ENCODE measurements at regions of chr1 and their contacts with region 1.

Region 1: DNA sequence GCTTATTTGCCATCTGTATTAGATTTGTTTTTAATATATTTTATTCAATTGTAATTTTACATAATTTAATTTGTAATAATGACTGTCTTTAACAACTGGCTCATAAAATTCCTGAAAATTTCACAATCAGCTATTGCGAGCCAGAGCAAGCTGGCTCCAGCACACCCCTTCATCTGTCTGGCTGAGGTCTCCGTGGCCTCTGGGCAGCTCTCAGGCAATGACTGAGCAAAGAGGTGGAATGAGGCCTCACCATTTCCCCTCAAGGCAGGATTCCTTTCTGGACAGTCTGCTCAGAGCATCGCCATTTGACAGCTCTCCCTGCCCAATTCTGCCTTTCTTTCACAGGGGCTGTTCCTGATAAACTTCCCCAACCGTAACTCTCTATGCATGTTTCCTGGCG is 5.8 kb upstream of the KANK4 start:
- DNase-seq: peak; percentile 89
- H3K4me3 Mint-ChIP-seq: peak overlapping the region; percentile 54
- H3K27ac Mint-ChIP-seq: peak overlapping the region; percentile 16
- H3K4me1 Mint-ChIP-seq: peaks cover 34% of the 10 kb centered on the region
- H3K27me3 Mint-ChIP-seq: no peaks in the 10 kb centered on the region
- CTCF ChIP-seq: no peak

Region 2: GRCh38 chr1:61606448-61607312 is 718.4 kb before region 1 on chr1:
- CTCF ChIA-PET with region 1: no interaction called
- POLR2A ChIA-PET with region 1: no interaction called
- intact Hi-C with region 1: no loop called
- DNase-seq: peak; percentile 71
- H3K4me3 Mint-ChIP-seq: peak overlapping the region; percentile 10
- H3K27ac Mint-ChIP-seq: peak overlapping the region; percentile 78
- H3K4me1 Mint-ChIP-seq: peaks cover 20% of the 10 kb centered on the region
- H3K27me3 Mint-ChIP-seq: no peaks in the 10 kb centered on the region
- CTCF ChIP-seq: no peak

Region 3: DNA sequence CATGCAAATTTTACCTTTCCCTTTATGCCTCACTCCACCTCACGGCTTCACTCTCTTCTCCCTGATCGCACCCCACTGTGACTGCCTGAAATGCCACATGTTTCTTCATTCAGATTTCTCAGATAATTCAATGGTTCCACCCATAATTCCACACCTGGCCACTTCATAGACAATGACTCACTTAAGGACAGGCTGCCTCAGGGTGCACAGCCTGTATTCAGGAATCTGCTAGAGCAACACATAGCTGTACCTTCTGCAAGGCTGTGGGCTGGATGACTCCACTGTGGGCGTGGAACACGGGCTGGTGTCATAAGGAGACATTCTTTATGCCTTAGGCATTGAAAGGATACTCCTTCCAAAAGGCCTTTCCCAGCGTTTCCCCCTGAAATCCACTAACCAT is 94.4 kb before region 1 on chr1:
- CTCF ChIA-PET with region 1: no interaction called
- POLR2A ChIA-PET with region 1: interaction called, 6 read pairs
- intact Hi-C with region 1: loop called (anchors 2 kb)
- DNase-seq: peak; percentile 97
- H3K4me3 Mint-ChIP-seq: peak overlapping the region; percentile 6
- H3K27ac Mint-ChIP-seq: peak overlapping the region; percentile 43
- H3K4me1 Mint-ChIP-seq: peaks cover 40% of the 10 kb centered on the region
- H3K27me3 Mint-ChIP-seq: no peaks in the 10 kb centered on the region
- CTCF ChIP-seq: no peak

Measured in MCF 10A (cell line).